Activated B cell treated with CpG ODN at 0.5 μM for 24 hours (primary cell): ENCODE measurements at regions of chr17 and their contacts with region 1.

Region 1: GRCh38 chr17:57440522-57441485 is 184.5 kb downstream of the MSI2 start:
- DNase-seq: no peak
- ATAC-seq: peak; percentile 74
- H3K4me3 Mint-ChIP-seq: peak overlapping the region; percentile 32
- H3K27ac Mint-ChIP-seq: peak overlapping the region; percentile 81
- H3K4me1 Mint-ChIP-seq: peaks cover 91% of the 10 kb centered on the region
- H3K27me3 Mint-ChIP-seq: no peaks in the 10 kb centered on the region
- CTCF ChIP-seq: no peak

Region 2: DNA sequence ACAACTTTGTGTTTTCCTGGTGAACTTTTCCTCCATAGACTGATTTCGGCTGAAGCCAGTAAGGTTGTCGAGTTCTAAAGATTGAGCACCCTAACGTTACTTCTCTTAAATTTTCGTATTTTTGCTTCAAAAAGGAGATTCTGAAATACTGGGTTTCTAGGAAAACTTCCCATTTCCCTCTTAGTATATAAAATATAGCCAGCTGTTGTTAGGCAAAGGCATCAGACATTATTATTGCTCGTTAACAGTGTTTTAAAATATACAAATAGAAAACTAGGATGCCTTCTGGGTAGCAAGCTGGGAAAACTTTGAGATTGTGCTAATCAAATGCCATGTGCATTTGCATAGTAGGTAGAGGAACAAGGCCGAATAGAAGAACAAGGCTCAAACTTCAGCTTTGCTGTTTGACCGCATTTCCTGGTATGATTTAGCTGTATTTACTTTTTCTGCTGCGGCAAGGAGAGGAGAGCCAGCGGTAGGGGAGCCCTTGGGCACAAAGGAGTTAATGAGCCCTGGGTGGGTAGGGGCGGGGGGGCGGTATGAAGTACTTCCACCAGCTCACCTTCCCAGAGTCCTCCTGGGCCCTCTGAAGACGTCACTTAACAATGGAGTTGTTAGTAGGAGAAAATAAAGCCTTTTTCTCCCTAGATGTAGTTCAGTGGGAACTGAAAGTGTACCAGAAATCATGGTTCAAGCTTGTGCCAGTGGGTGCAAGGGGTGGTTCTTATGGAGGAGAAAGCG is 32.6 kb before region 1 on chr17:
- CTCF ChIA-PET with region 1: no interaction called
- POLR2A ChIA-PET with region 1: no interaction called
- intact Hi-C with region 1: loop called (anchors 5 kb)
- DNase-seq: no peak
- ATAC-seq: peak; percentile 81
- H3K4me3 Mint-ChIP-seq: peak overlapping the region; percentile 55
- H3K27ac Mint-ChIP-seq: peak overlapping the region; percentile 74
- H3K4me1 Mint-ChIP-seq: peaks cover 25% of the 10 kb centered on the region
- H3K27me3 Mint-ChIP-seq: no peaks in the 10 kb centered on the region
- CTCF ChIP-seq: no peak

Region 3: DNA sequence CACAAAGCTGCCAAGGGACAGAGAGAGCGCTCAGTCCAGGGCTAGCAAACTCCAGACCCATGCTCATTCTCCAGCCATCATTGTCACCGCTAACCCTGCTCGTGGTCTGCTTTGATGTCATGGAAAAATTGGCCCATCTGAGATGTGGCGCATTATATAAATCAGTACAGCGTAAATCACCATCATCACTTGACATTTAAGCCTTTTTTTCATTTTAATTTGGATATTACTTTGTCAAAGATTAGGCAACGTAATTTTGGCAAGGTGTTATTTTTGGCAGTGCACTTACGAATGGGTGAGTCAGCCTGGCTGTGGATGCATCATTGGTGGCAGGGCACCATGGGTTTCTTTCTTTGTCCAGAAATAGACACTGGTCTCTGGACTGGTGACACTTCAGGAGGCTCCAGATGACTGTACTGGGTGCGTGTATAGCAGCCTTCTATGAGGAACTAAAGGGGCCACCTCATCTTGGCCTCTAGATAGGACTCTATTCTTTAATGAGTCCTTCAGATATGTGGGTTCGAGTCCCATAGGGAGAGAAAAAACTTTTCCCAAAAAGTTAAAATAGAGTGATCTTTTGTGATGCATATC is 18.1 kb before region 1 on chr17:
- CTCF ChIA-PET with region 1: no interaction called
- POLR2A ChIA-PET with region 1: interaction called, 3 read pairs
- intact Hi-C with region 1: loop called (anchors 2 kb)
- DNase-seq: no peak
- ATAC-seq: peak; percentile 93
- H3K4me3 Mint-ChIP-seq: peak overlapping the region; percentile 35
- H3K27ac Mint-ChIP-seq: peak overlapping the region; percentile 50
- H3K4me1 Mint-ChIP-seq: peaks cover 46% of the 10 kb centered on the region
- H3K27me3 Mint-ChIP-seq: no peaks in the 10 kb centered on the region
- CTCF ChIP-seq: no peak